ENCODE measurements at regions of chr11 and their contacts with region 1.

Region 1: DNA sequence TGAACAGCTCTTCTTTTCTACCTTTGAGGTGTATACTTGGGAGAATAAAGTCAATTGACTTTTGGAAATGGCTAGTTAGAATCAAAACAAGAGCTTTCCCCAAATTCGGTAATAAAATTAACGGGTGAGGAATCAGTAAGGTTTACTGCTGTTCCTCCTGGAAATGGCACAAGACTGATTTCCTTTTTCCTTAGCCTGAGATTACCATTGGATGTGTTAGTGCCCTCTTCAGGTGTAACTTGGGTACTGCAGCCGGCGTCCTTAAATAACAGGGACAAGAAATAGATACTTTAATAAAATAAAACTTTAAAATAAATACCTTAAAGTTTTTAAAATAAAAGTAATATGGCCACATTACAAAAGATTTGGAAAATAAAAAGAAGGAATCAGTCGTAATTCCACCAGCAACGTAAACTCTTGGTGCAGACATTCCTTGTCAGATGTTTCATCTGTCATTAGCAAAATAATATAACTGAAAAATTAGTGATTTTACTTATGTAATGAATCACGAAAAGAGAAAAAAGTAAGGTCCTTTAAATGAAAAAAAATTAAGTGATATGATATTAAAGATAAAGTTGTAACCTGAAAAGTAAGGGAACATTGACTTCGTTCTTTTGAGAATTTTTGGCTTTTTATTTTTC is 29.7 kb downstream of the ZFTA start:
- DNase-seq: peak; percentile 26
- H3K4me3 Mint-ChIP-seq: no peak overlapping the region
- H3K27ac Mint-ChIP-seq: no peak overlapping the region
- H3K4me1 Mint-ChIP-seq: peaks cover 5% of the 10 kb centered on the region
- H3K27me3 Mint-ChIP-seq: no peaks in the 10 kb centered on the region

Region 2: DNA sequence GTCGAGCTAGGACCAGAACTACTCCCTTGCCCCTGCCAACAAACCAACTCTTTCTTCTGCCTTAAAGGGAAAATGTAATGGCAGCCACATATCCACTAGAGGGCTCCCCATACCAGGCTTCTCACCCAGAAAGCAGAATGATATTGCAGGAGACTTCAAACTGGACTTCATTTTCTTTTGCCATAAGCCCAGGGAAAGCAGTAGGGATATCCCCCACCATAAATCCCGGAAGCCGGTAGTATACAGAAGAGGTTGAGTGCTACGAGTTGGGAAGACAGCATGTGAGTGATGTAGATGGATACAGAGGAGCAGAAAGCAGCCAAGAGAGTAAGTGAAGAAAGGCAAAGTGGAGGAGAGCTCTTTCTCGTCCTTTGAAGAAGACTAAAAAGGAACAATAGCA is 259.9 kb before region 1 on chr11:
- intact Hi-C with region 1: loop called (anchors 1 kb)
- DNase-seq: peak; percentile 31
- H3K4me3 Mint-ChIP-seq: no peak overlapping the region
- H3K27ac Mint-ChIP-seq: no peak overlapping the region
- H3K4me1 Mint-ChIP-seq: no peaks in the 10 kb centered on the region
- H3K27me3 Mint-ChIP-seq: peaks cover 36% of the 10 kb centered on the region

Region 3: DNA sequence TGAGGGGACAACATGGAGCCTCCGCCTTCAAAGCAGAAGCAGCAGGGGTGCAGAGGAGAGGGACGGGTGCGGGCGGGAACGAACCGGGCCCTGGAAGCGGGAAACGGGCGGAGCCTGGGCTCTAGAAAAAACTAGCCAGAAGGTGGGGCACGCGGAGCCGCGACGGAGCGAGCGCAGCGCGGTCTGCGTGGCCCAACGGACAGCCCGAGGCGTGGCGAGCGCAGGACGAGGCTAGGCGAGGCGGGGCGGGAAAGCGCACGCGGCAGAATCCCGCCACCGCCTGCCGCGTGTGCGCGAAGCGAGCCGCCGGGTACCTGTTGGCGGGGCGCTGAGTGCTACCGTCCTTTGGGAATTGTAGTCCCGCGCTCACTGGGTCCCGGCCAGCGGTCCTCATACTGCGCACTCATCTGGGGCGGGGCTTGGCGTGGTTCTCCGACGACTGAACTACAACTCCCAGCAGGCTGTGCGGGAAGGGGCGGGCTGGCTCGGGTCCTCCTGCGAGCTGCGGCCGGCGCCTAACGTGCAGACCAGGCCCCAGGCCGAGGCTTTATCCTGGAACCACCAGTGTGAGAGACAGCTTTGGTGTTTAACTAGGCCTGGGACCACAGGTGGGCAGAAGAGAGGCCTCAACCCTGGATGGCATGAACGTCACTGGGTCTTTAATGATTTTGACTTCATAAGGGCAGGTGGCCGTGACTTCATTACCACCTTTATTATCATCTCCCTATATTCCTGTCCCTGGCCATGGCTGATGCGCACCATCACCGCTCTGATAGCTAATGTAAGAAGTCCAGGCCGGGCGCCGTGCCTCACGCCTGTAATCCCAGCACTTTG is 67.3 kb before region 1 on chr11 and contains the start of gene ATL3:
- intact Hi-C with region 1: loop called (anchors 1 kb)
- DNase-seq: peak; percentile 91
- H3K4me3 Mint-ChIP-seq: peak within 1 kb of the TSS; percentile 92
- H3K27ac Mint-ChIP-seq: peak within 1 kb of the TSS; percentile 81
- H3K4me1 Mint-ChIP-seq: peaks cover 25% of the 10 kb centered on the region
- H3K27me3 Mint-ChIP-seq: no peaks in the 10 kb centered on the region
- total RNA-seq, gene ATL3: 35.6 and 37.0 TPM in 2 replicates

Region 4: GRCh38 chr11:63687845-63688244 is 51.0 kb before region 1 on chr11:
- intact Hi-C with region 1: no loop called
- DNase-seq: no peak
- H3K4me3 Mint-ChIP-seq: no peak overlapping the region
- H3K27ac Mint-ChIP-seq: no peak overlapping the region
- H3K4me1 Mint-ChIP-seq: peaks cover 32% of the 10 kb centered on the region
- H3K27me3 Mint-ChIP-seq: no peaks in the 10 kb centered on the region